CD4-positive, alpha-beta memory T cell (primary cell): ENCODE measurements at regions of chr7 and their contacts with region 1.

Region 1: DNA sequence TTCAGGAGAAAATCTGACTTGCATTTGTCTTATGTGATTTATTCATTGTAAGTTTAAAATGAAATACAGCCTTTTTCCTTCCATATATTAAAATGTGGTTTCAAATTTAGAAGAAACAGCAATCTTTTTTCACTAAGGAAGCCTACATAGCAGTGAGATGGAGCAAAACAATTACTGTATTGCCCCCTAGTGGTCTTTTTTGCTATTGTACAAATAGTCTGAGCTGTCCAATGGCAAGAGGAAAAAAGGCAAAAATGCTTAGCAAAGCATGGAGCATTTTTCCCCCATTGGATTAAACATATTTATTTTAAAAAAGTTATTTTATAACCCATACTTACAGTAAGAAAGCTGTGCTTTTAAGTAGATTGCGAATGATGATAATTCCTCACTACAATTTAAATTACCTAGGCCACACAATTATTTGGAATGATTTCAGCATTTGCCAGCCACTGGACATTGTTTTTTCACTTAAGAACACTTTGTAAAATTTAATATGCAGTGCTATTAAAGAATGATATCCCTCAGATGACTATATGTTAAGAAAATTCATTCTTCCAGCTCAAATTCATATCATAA is 119.5 kb downstream of the CPED1 start:
- DNase-seq: peak in 4 of 5 donors; percentile 47 to 56 (median 54)
- H3K4me3 ChIP-seq: no peak overlapping the region
- H3K4me3 Mint-ChIP-seq: no peak overlapping the region
- H3K27ac ChIP-seq: no peak overlapping the region
- H3K27ac Mint-ChIP-seq: no peak overlapping the region
- H3K4me1 ChIP-seq: no peaks in the 10 kb centered on the region
- H3K4me1 Mint-ChIP-seq: no peaks in the 10 kb centered on the region
- H3K27me3 ChIP-seq: no peaks in the 10 kb centered on the region
- H3K27me3 Mint-ChIP-seq: peaks cover 3 to 10% of the 10 kb centered on the region in 2 donors

Region 2: GRCh38 chr7:120320218-120320961 is 787.6 kb before region 1 on chr7:
- CTCF ChIA-PET with region 1: no interaction called
- POLR2A ChIA-PET with region 1: no interaction called
- intact Hi-C with region 1: no loop called
- DNase-seq: no peak
- H3K4me3 ChIP-seq: no peak overlapping the region
- H3K4me3 Mint-ChIP-seq: no peak overlapping the region
- H3K27ac ChIP-seq: no peak overlapping the region
- H3K27ac Mint-ChIP-seq: no peak overlapping the region
- H3K4me1 ChIP-seq: no peaks in the 10 kb centered on the region
- H3K4me1 Mint-ChIP-seq: no peaks in the 10 kb centered on the region
- H3K27me3 ChIP-seq: no peaks in the 10 kb centered on the region
- H3K27me3 Mint-ChIP-seq: no peaks in the 10 kb centered on the region

Region 3: DNA sequence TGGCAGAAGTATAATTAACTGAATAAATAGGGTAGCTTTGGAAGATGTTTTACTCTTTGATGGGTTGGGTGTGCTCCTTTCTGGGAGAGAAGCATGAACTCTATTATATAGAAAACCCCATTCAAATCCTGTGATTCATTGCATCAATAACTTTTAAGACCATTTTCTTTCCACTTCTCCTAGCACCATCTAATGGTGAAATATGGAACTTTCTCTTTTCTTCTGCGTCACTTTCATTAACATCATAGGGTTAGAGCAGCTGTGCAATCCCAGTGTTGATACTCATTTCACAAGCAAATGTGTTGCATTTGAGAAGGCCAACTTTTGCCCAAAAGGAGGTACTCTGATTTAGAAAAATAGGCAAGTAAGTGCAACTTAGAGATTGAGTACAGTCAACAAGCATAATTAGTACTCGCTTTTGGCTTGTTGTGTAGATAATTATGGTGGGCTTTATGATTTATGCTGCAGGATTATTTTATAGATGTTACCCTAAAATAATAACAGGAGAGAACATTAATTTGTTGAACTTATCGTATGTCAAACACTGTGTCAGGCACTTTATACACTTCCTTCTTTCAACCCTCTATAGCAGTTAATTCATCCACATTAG is 26.6 kb before region 1 on chr7:
- CTCF ChIA-PET with region 1: interaction called, 10 read pairs
- POLR2A ChIA-PET with region 1: no interaction called
- intact Hi-C with region 1: no loop called
- DNase-seq: peak in 4 of 5 donors; percentile 39 to 51 (median 44)
- H3K4me3 ChIP-seq: no peak overlapping the region
- H3K4me3 Mint-ChIP-seq: no peak overlapping the region
- H3K27ac ChIP-seq: no peak overlapping the region
- H3K27ac Mint-ChIP-seq: no peak overlapping the region
- H3K4me1 ChIP-seq: no peaks in the 10 kb centered on the region
- H3K4me1 Mint-ChIP-seq: no peaks in the 10 kb centered on the region
- H3K27me3 ChIP-seq: no peaks in the 10 kb centered on the region
- H3K27me3 Mint-ChIP-seq: peaks cover 12 to 14% of the 10 kb centered on the region in 2 donors